Calu3 (cell line): ENCODE measurements at regions of chr12 and their contacts with region 1.

Region 1: GRCh38 chr12:106214571-106214970 is 33.2 kb downstream of the CKAP4 start:
- DNase-seq: no peak
- H3K4me3 Mint-ChIP-seq: no peak overlapping the region
- H3K27ac Mint-ChIP-seq: no peak overlapping the region
- H3K4me1 Mint-ChIP-seq: no peaks in the 10 kb centered on the region
- H3K27me3 Mint-ChIP-seq: peaks cover 85% of the 10 kb centered on the region
- CTCF ChIP-seq: no peak

Region 2: DNA sequence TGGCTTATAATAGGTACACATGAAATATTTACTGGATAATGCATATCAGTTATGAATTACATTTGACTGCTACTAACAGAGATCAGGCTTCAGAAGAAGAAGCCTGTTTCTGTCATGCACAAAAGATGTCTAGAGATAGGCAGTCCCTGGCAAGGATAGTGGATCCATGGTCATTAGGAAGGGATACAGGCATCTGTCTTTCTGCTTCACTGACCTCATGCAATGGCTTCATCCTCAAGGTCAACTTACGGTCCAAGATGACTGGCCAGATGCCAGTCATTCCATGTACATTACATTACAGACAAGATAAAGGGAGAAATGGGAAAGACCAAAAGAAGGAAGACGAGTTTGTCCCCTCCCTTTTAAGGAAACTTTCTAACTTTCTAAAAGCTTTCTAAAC is 169.8 kb before region 1 on chr12:
- CTCF ChIA-PET with region 1: no interaction called
- intact Hi-C with region 1: no loop called
- DNase-seq: no peak
- H3K4me3 Mint-ChIP-seq: no peak overlapping the region
- H3K27ac Mint-ChIP-seq: no peak overlapping the region
- H3K4me1 Mint-ChIP-seq: no peaks in the 10 kb centered on the region
- H3K27me3 Mint-ChIP-seq: peaks cover 21% of the 10 kb centered on the region
- CTCF ChIP-seq: no peak

Region 3: DNA sequence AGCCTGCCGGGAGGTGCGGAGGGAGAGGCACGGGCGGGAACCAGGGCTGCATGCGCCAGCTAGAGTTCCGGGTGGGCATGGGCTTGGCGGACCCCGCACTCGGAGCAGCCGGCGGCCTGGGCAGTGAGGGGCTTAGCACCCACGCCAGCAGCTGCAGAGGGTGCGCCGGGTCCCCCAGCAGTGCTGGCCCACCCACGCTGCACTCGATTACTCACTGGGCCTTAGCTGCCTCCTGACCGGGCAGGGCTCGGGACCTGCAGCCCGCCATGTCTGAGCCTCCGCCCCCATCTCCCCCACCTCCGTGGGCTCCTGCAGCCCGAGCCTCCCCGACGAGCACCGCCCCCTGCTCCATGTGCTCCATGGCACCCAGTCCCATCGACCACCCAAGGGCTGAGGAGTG is 18.4 kb after region 1 on chr12:
- CTCF ChIA-PET with region 1: interaction called, 13 read pairs
- intact Hi-C with region 1: no loop called
- DNase-seq: no peak
- H3K4me3 Mint-ChIP-seq: no peak overlapping the region
- H3K27ac Mint-ChIP-seq: no peak overlapping the region
- H3K4me1 Mint-ChIP-seq: peaks cover under 1% of the 10 kb centered on the region
- H3K27me3 Mint-ChIP-seq: no peaks in the 10 kb centered on the region
- CTCF ChIP-seq: no peak